WTC11 (cell line): ENCODE measurements at regions of chr7 and their contacts with region 1.

Region 1: GRCh38 chr7:116588641-116589594 is 64.1 kb downstream of the CAV1 start:
- DNase-seq: no peak
- ATAC-seq: peak; percentile 24; the same call in 1 of the 2 replicates
- H3K4me3 Mint-ChIP-seq: no peak overlapping the region
- H3K27ac Mint-ChIP-seq: no peak overlapping the region
- H3K4me1 Mint-ChIP-seq: peaks cover 21% of the 10 kb centered on the region
- H3K27me3 Mint-ChIP-seq: no peaks in the 10 kb centered on the region
- CTCF ChIP-seq: peak; percentile 55

Region 2: DNA sequence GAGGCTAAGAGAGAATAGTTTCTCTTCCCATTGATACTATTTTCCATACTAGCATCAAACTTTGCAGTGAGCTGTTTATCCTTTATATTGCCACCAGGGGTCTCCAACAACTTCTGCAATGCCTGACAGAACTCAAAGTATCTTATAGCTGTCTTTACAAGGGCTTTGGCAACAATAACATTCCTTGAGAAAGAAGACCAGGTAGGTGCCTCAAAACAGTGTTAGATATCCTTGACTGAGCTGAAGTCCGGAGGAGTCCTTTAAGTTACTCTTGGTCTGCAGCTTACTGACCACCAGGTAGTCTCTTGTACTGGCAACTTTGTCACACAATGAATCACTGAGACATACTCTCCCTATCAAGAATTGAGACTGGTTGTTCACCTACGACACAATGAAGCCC is 408.6 kb before region 1 on chr7:
- CTCF ChIA-PET with region 1: interaction called, 31 read pairs
- POLR2A ChIA-PET with region 1: no interaction called
- DNase-seq: no peak
- ATAC-seq: peak; percentile 90
- H3K4me3 Mint-ChIP-seq: no peak overlapping the region
- H3K27ac Mint-ChIP-seq: no peak overlapping the region
- H3K4me1 Mint-ChIP-seq: no peaks in the 10 kb centered on the region
- H3K27me3 Mint-ChIP-seq: peaks cover 11% of the 10 kb centered on the region
- CTCF ChIP-seq: peak; percentile 41; the same call in 1 of the 2 replicates

Region 3: DNA sequence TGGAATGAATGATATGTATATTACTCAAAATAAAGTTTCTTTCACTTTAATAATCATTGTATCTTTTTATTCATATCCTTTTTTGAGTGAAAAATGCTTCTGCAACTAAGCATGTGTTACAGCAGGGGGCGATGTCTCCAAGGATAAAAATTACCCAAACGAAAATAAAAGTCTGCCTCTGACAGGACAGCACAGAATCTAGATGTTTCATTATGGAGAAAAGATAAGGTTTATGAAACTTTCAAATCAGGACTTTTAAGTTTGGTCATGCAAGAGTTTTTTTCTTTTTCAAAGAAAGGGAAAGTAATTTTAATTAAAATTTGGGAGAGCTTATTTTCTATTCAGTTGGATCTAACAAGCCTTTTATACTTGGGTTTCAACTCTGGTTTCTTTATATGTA is 330.2 kb before region 1 on chr7:
- CTCF ChIA-PET with region 1: interaction called, 14 read pairs
- POLR2A ChIA-PET with region 1: no interaction called
- DNase-seq: no peak
- ATAC-seq: no peak; the same call in 1 of the 2 replicates
- H3K4me3 Mint-ChIP-seq: no peak overlapping the region
- H3K27ac Mint-ChIP-seq: no peak overlapping the region
- H3K4me1 Mint-ChIP-seq: 0 out of 2 replicates have a peak, but pooled peaks cover under 1% of the 10 kb centered on the region
- H3K27me3 Mint-ChIP-seq: no peaks in the 10 kb centered on the region
- CTCF ChIP-seq: peak; percentile 73

Region 4: GRCh38 chr7:116525913-116526861 is 62.7 kb before region 1 on chr7:
- CTCF ChIA-PET with region 1: interaction called, 18 read pairs
- POLR2A ChIA-PET with region 1: no interaction called
- DNase-seq: peak; percentile 79
- ATAC-seq: peak; percentile 76
- H3K4me3 Mint-ChIP-seq: peak overlapping the region; percentile 95
- H3K27ac Mint-ChIP-seq: peak overlapping the region; percentile 89
- H3K4me1 Mint-ChIP-seq: peaks cover 58% of the 10 kb centered on the region
- H3K27me3 Mint-ChIP-seq: peaks cover 24% of the 10 kb centered on the region
- CTCF ChIP-seq: peak; percentile 82

Region 5: GRCh38 chr7:116786791-116787443 is 198.0 kb after region 1 on chr7:
- CTCF ChIA-PET with region 1: interaction called, 15 read pairs
- POLR2A ChIA-PET with region 1: no interaction called
- DNase-seq: no peak
- ATAC-seq: peak; percentile 73
- H3K4me3 Mint-ChIP-seq: no peak overlapping the region
- H3K27ac Mint-ChIP-seq: no peak overlapping the region
- H3K4me1 Mint-ChIP-seq: peaks cover 17% of the 10 kb centered on the region; the same call in 1 of the 2 replicates
- H3K27me3 Mint-ChIP-seq: no peaks in the 10 kb centered on the region; the same call in 1 of the 2 replicates
- CTCF ChIP-seq: no peak

Region 6: GRCh38 chr7:117296066-117296465 is 707.1 kb after region 1 on chr7:
- CTCF ChIA-PET with region 1: no interaction called
- POLR2A ChIA-PET with region 1: no interaction called
- DNase-seq: no peak
- ATAC-seq: peak; percentile 75
- H3K4me3 Mint-ChIP-seq: no peak overlapping the region
- H3K27ac Mint-ChIP-seq: no peak overlapping the region
- H3K4me1 Mint-ChIP-seq: no peaks in the 10 kb centered on the region
- H3K27me3 Mint-ChIP-seq: no peaks in the 10 kb centered on the region; the same call in 1 of the 2 replicates
- CTCF ChIP-seq: no peak